Mucosa of descending colon (tissue), 3 donors: ENCODE measurements at regions of chr11 and their contacts with region 1.

Region 1: GRCh38 chr11:8566613-8567210 is 27.3 kb downstream of the STK33 start:
- DNase-seq: peak in 1 of 3 donors; percentile 12
- ATAC-seq: peak; percentile 65
- H3K4me3 ChIP-seq: no peak overlapping the region
- H3K4me1 ChIP-seq: peaks cover 4% of the 10 kb centered on the region
- CTCF ChIP-seq: peak; percentile 14

Region 2: GRCh38 chr11:8225589-8226036 is 341.1 kb before region 1 on chr11:
- intact Hi-C with region 1: loop called (anchors 5 kb)
- DNase-seq: peak in 2 of 3 donors; percentile 75 to 82
- ATAC-seq: peak; percentile 21
- H3K4me3 ChIP-seq: no peak overlapping the region
- H3K4me1 ChIP-seq: peaks cover 3% of the 10 kb centered on the region
- CTCF ChIP-seq: peak; percentile 70

Region 3: GRCh38 chr11:8338138-8338537 is 228.6 kb before region 1 on chr11:
- intact Hi-C with region 1: loop called (anchors 10 kb)
- DNase-seq: peak in 2 of 3 donors; percentile 70 to 71
- ATAC-seq: peak; percentile 79
- H3K4me3 ChIP-seq: no peak overlapping the region
- H3K4me1 ChIP-seq: no peaks in the 10 kb centered on the region
- CTCF ChIP-seq: peak; percentile 57

Region 4: GRCh38 chr11:8604078-8604723 is 37.5 kb after region 1 on chr11:
- intact Hi-C with region 1: no loop called
- DNase-seq: peak in 2 of 3 donors; percentile 69 to 72
- ATAC-seq: peak; percentile 89
- H3K4me3 ChIP-seq: no peak overlapping the region
- H3K4me1 ChIP-seq: no peaks in the 10 kb centered on the region
- CTCF ChIP-seq: peak; percentile 47